ENCODE measurements at regions of chr21 and their contacts with region 1.

Region 1: GRCh38 chr21:41777951-41778874 is 11.4 kb upstream of the RIPK4 start:
- DNase-seq: peak; percentile 90 to 98
- H3K4me3 ChIP-seq: no peak overlapping the region
- CTCF ChIP-seq: peak in 1 of 3 donors; percentile 72
- POLR2A ChIP-seq: no peak

Region 2: GRCh38 chr21:41612674-41613532 is 165.3 kb before region 1 on chr21:
- intact Hi-C with region 1: loop called (anchors 5 kb)
- DNase-seq: peak; percentile 89 to 96
- H3K4me3 ChIP-seq: no peak overlapping the region
- CTCF ChIP-seq: peak in 1 of 3 donors; percentile 18
- POLR2A ChIP-seq: no peak

Region 3: GRCh38 chr21:41761211-41762181 is 16.7 kb before region 1 on chr21:
- intact Hi-C with region 1: no loop called
- DNase-seq: peak in 1 of 2 donors; percentile 92
- H3K4me3 ChIP-seq: no peak overlapping the region
- CTCF ChIP-seq: no peak
- POLR2A ChIP-seq: no peak